ENCODE measurements at regions of chr16 and their contacts with region 1.

Region 1: DNA sequence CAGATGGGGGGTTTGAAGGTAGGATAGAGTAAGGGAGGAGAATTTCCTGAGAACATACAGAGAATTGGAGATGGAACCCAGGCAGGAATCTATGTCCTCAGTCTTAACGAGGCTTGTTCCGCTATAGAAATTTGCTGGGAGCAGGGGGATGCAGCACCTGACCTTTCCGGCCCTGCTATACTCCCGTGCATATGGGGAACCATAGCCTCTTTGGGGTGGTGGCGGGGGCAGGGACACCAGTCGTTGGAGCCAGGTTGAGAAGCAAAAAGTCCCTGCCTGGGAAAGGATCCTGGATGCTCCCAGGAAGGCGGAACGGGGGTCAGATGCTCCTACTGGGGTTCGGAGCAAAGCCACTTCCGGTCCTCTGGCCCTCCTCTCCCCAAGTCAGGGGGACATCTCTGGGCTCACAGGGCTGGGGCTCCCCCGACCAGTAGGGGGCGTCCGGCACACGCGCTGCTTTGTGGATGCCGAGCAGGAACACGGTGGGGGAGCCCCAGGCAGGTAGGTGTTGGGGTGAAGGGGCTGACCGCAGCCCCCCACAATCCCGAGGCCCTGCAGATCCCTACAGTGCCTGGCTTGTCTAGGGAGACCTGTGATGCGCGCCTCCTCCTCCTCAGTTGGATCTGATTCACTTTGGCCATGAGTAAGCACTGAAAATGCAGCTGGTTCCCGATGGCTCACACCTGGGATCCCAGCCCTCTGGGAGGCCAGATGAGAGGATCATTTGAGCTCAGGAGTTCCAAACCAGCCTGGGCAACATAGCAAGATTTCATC is 15.5 kb upstream of the TFAP4 start:
- DNase-seq: peak; percentile 54
- H3K4me3 ChIP-seq: no peak overlapping the region
- H3K27ac ChIP-seq: no peak overlapping the region
- H3K4me1 ChIP-seq: no peaks in the 10 kb centered on the region
- H3K27me3 ChIP-seq: peaks cover 0 to 4% of the 10 kb centered on the region in 2 experiments
- CTCF ChIP-seq: peak; percentile 96 to 97
- POLR2A ChIP-seq: no peak

Region 2: DNA sequence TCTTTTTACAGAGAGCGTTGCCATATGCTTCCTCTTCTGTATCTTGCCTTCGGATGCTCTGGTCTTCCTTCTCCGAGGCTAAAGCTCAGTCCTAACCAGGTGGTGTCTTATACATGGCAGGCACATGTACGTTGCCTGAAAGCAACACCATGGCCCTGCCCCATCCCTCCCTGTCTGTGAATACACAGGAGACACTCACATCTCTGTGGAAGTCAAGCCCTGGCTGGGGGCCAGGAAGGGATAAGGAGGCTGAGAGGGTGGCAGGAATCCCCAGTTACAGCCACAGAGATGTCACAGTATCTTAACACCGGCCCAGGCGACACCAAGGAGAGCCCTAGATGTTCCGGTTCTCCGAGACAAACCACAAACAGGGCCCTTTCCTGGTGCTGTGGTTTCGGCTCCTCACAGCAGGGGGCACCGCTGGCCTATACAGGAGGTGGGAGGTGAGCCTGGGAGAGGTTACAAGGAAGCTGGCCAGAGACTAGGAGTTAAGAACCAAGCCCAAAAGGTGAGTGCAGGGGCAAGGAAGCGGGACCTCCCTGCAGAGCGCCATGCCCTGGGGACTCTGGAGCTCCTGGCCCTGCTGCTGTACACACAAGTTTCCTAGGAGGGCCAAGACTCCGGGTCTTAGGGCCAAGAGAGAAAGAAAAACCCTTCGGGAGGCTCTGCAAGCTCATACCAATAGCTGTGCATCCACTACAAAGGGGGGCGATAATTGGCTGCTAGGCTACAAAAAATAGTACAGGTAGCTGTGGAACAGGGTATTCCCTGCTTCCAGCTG is 88.1 kb before region 1 on chr16:
- CTCF ChIA-PET with region 1: interaction called, 10 read pairs
- POLR2A ChIA-PET with region 1: no interaction called
- dilution Hi-C with region 1: no loop called
- intact Hi-C with region 1: no loop called
- DNase-seq: peak; percentile 62
- H3K4me3 ChIP-seq: no peak overlapping the region
- H3K27ac ChIP-seq: no peak overlapping the region
- H3K4me1 ChIP-seq: no peaks in the 10 kb centered on the region
- H3K27me3 ChIP-seq: no peaks in the 10 kb centered on the region
- CTCF ChIP-seq: peak; percentile 46 to 83
- POLR2A ChIP-seq: no peak

Region 3: DNA sequence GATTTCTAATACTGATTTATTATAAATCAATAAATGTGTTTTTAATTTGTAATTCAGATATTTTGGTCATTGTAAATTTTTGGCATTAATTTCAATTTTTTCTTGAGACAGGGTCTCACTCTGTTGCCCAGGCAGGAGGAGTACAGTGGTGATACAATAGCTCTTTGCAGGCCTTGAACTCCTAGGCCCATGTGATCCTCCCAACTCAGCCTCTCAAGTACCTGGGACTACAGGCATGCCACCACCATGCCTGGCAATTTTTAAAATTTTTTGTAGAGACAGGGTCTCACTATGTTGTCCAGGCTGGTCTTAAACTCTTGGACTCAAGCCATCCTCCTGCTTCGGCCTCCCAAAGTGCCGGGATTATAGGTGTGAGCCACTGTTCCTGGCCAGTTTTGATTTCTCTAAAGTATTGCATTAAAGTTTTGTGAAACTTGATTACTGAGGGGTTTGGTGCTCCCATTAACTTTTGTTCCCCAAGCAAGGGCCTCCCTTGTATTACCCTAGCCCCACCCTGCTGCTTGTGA is 10.3 kb before region 1 on chr16:
- CTCF ChIA-PET with region 1: interaction called, 14 read pairs
- POLR2A ChIA-PET with region 1: no interaction called
- dilution Hi-C with region 1: no loop called
- intact Hi-C with region 1: loop called (anchors 2 kb)
- DNase-seq: no peak
- H3K4me3 ChIP-seq: no peak overlapping the region
- H3K27ac ChIP-seq: no peak overlapping the region
- H3K4me1 ChIP-seq: peaks cover 5% of the 10 kb centered on the region
- H3K27me3 ChIP-seq: no peaks in the 10 kb centered on the region
- CTCF ChIP-seq: no peak
- POLR2A ChIP-seq: no peak

Region 4: DNA sequence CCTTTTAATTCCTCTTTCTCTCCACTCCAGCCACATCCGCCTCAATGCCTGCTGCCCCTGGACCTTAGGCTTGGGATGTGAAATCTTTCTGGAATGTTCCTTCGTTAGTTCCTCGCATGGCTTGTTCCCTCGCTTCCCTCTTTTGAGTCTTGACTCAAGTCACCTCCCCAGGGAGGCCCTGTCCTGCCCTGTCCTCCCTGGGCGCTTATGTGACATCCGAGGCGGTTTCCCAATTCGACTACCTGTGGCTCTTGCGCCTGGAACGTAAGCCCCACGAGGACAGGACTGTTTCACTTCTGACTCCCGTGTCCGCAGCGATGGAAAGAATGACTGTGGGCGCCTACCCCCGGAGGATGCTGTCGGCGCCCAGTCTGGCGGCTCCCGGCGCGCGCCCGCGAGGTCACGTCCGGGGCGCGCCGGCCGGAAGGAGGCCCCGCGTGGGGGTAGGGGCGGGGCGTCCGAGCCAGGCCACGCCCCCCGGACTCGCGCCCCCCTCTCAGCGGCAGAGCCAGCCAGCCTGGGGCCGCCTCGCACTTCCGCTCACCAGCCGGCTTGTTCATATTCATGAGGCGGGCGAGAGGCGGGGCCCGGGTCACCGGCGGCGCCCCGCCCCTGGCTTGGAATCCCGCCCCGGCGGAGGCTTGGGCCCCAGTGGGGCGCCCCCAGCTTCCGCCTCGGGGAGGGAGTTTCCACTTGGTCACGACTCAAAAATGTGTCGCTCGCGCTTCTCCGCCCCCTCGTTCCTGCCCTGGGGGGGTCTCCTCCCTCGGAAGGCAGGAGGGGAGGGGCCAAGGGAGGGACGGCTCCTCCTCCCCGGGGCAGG is 19.1 kb after region 1 on chr16:
- CTCF ChIA-PET with region 1: interaction called, 30 read pairs
- POLR2A ChIA-PET with region 1: no interaction called
- dilution Hi-C with region 1: no loop called
- intact Hi-C with region 1: loop called (anchors 1 kb)
- DNase-seq: peak; percentile 88
- H3K4me3 ChIP-seq: peak overlapping the region in 2 of 3 experiments; percentile 25 to 33
- H3K27ac ChIP-seq: peak overlapping the region; percentile 76
- H3K4me1 ChIP-seq: peaks cover 7% of the 10 kb centered on the region
- H3K27me3 ChIP-seq: no peaks in the 10 kb centered on the region
- CTCF ChIP-seq: no peak
- POLR2A ChIP-seq: no peak

Region 5: GRCh38 chr16:4323845-4324478 is 35.6 kb after region 1 on chr16:
- CTCF ChIA-PET with region 1: interaction called, 198 read pairs
- POLR2A ChIA-PET with region 1: no interaction called
- dilution Hi-C with region 1: no loop called
- intact Hi-C with region 1: no loop called
- DNase-seq: no peak
- H3K4me3 ChIP-seq: no peak overlapping the region
- H3K27ac ChIP-seq: no peak overlapping the region
- H3K4me1 ChIP-seq: peaks cover 30% of the 10 kb centered on the region
- H3K27me3 ChIP-seq: no peaks in the 10 kb centered on the region
- CTCF ChIP-seq: no peak
- POLR2A ChIP-seq: no peak

Region 6: GRCh38 chr16:4517812-4518680 is 229.7 kb after region 1 on chr16:
- CTCF ChIA-PET with region 1: no interaction called
- POLR2A ChIA-PET with region 1: no interaction called
- dilution Hi-C with region 1: no loop called
- intact Hi-C with region 1: no loop called
- DNase-seq: peak; percentile 66
- H3K4me3 ChIP-seq: no peak overlapping the region
- H3K27ac ChIP-seq: no peak overlapping the region
- H3K4me1 ChIP-seq: peaks cover 22% of the 10 kb centered on the region
- H3K27me3 ChIP-seq: no peaks in the 10 kb centered on the region
- CTCF ChIP-seq: peak; percentile 64 to 76
- POLR2A ChIP-seq: no peak

Region 7: GRCh38 chr16:5056352-5056751 is 768.0 kb after region 1 on chr16:
- CTCF ChIA-PET with region 1: no interaction called
- POLR2A ChIA-PET with region 1: no interaction called
- dilution Hi-C with region 1: no loop called
- intact Hi-C with region 1: no loop called
- DNase-seq: peak; percentile 24
- H3K4me3 ChIP-seq: no peak overlapping the region
- H3K27ac ChIP-seq: no peak overlapping the region
- H3K4me1 ChIP-seq: no peaks in the 10 kb centered on the region
- H3K27me3 ChIP-seq: no peaks in the 10 kb centered on the region
- CTCF ChIP-seq: peak; percentile 50 to 67
- POLR2A ChIP-seq: no peak